Mammary epithelial cell (primary cell): ENCODE measurements at regions of chr1 and their contacts with region 1.

Region 1: DNA sequence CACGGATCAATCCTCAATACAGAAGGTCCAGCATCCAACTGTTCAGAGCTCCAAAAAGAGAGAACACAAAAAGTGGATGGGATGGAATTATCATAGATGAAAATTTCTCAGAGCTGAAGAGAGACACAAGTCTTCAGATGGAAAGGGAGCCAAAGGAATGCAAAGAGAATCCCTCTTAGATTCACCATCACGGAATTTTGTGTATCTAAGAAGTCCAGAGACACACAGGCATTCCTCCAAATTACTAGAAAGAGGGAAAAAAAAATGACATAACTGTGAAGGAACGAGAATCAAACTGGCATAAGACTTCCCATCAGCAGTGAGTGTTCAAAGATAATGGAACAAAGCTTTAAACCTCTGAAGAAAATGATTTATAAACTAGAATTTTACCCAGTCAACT is 101.2 kb downstream of the ZSCAN20 start:
- DNase-seq: no peak
- H3K4me3 ChIP-seq: no peak overlapping the region
- H3K27ac ChIP-seq: no peak overlapping the region
- H3K4me1 ChIP-seq: no peaks in the 10 kb centered on the region
- H3K27me3 ChIP-seq: no peaks in the 10 kb centered on the region
- CTCF ChIP-seq: no peak

Region 2: GRCh38 chr1:33512226-33513011 is 61.2 kb before region 1 on chr1:
- CTCF ChIA-PET with region 1: no interaction called
- dilution Hi-C with region 1: loop called (anchors 5 kb)
- in situ Hi-C with region 1: no loop called
- intact Hi-C with region 1: no loop called
- DNase-seq: peak; percentile 4
- H3K4me3 ChIP-seq: no peak overlapping the region
- H3K27ac ChIP-seq: no peak overlapping the region
- H3K4me1 ChIP-seq: no peaks in the 10 kb centered on the region
- H3K27me3 ChIP-seq: peaks cover 3% of the 10 kb centered on the region
- CTCF ChIP-seq: no peak